Heart left ventricle (tissue), 16 donors: ENCODE measurements at regions of chr1 and their contacts with region 1.

Region 1: GRCh38 chr1:23344111-23344986 is at the start of gene HNRNPR:
- DNase-seq: peak; percentile 100
- ATAC-seq: peak; percentile 97 to 99 (median 99)
- H3K4me3 ChIP-seq: peak within 1 kb of the TSS; percentile 73 to 95 (median 89)
- H3K27ac ChIP-seq: peak within 1 kb of the TSS; percentile 84 to 99 (median 94)
- H3K4me1 ChIP-seq: peaks cover 0 to 49% (median 36%) of the 10 kb centered on the region in 12 donors
- H3K27me3 ChIP-seq: no peaks in the 10 kb centered on the region
- CTCF ChIP-seq: peak in 4 of 12 donors; percentile 18 to 39 (median 25)
- POLR2A ChIP-seq: peak in 1 of 2 donors; percentile 75
- total RNA-seq, gene HNRNPR: 38.0 to 83.5 (median 69.2) TPM

Region 2: GRCh38 chr1:23303524-23303923 is 40.8 kb before region 1 on chr1:
- intact Hi-C with region 1: no loop called
- DNase-seq: no peak
- ATAC-seq: no peak
- H3K4me3 ChIP-seq: no peak overlapping the region
- H3K27ac ChIP-seq: no peak overlapping the region
- H3K4me1 ChIP-seq: no peaks in the 10 kb centered on the region
- H3K27me3 ChIP-seq: no peaks in the 10 kb centered on the region
- CTCF ChIP-seq: no peak
- POLR2A ChIP-seq: no peak

Region 3: DNA sequence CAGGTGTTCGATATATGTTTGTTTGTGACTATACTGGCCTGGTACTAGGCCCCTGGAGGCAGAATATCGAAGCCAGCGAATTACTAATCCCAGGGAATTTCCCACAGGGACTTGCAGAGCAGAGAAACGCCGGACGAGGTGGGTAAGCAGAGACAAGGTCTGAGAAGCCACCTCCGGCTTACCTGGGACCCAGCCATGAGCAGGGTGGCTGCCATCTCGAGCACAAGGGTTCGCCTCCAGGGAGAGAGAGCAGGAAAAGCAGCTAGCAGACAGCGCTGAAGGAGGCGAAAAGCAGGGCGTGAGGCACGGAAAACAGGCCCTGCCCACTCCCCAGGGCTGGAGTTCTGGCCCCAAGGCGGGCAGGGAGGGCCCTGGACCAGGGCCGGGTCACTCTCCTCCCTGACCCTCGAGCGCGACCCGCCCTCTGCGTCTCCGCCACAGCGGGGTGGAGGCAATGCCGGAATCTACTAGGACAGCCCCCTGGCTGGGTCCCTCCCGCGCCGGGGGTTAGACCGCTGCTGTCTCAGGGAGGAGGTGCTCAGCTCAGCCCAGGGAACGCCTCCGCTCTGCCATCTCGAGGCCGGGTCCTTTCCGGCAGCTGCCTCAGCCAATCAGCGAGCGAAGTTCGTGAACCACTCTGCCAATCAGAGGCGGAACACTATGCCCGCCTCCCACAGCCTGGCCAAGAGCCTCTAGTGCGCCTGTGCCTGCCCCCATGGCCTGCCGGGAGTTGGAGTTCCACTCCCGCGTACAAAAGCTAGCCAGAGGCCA is 23.6 kb after region 1 on chr1:
- intact Hi-C with region 1: loop called in 7 of 10 experiments (anchors 1 to 2 kb)
- DNase-seq: peak; percentile 99
- ATAC-seq: peak; percentile 92 to 95 (median 94)
- H3K4me3 ChIP-seq: peak overlapping the region; percentile 66 to 100 (median 87)
- H3K27ac ChIP-seq: peak overlapping the region; percentile 94 to 100 (median 98)
- H3K4me1 ChIP-seq: peaks cover 17 to 50% (median 40%) of the 10 kb centered on the region in 12 donors
- H3K27me3 ChIP-seq: no peaks in the 10 kb centered on the region
- CTCF ChIP-seq: peak in 5 of 12 donors; percentile 13 to 44 (median 29)
- POLR2A ChIP-seq: peak in 1 of 2 donors; percentile 78

Region 4: GRCh38 chr1:23403735-23404486 is 59.6 kb after region 1 on chr1:
- intact Hi-C with region 1: loop called in 7 of 10 experiments (anchors 1 to 10 kb)
- DNase-seq: peak; percentile 86 to 90 (median 90)
- ATAC-seq: peak; percentile 85 to 94 (median 88)
- H3K4me3 ChIP-seq: peak overlapping the region in 7 of 12 donors; percentile 1 to 28 (median 8)
- H3K27ac ChIP-seq: peak overlapping the region in 11 of 12 donors; percentile 32 to 76 (median 56)
- H3K4me1 ChIP-seq: peaks cover 5 to 60% (median 34%) of the 10 kb centered on the region in 12 donors
- H3K27me3 ChIP-seq: no peaks in the 10 kb centered on the region
- CTCF ChIP-seq: peak; percentile 88 to 99 (median 95)
- POLR2A ChIP-seq: no peak

Region 5: GRCh38 chr1:23422241-23423030 is 78.1 kb after region 1 on chr1:
- intact Hi-C with region 1: loop called in 1 of 10 experiments (anchors 5 kb)
- DNase-seq: peak; percentile 74 to 84 (median 82)
- ATAC-seq: peak; percentile 53 to 70 (median 56)
- H3K4me3 ChIP-seq: peak overlapping the region in 8 of 12 donors; percentile 5 to 80 (median 22)
- H3K27ac ChIP-seq: peak overlapping the region in 11 of 12 donors; percentile 71 to 95 (median 85)
- H3K4me1 ChIP-seq: peaks cover 0 to 59% (median 36%) of the 10 kb centered on the region in 12 donors
- H3K27me3 ChIP-seq: peaks cover 0 to 16% (median 0%) of the 10 kb centered on the region in 9 donors
- CTCF ChIP-seq: no peak
- POLR2A ChIP-seq: no peak

Region 6: GRCh38 chr1:23484253-23485001 is 140.1 kb after region 1 on chr1:
- intact Hi-C with region 1: loop called in 3 of 10 experiments (anchors 2 to 10 kb)
- DNase-seq: peak; percentile 94 to 97 (median 96)
- ATAC-seq: peak; percentile 87 to 94 (median 92)
- H3K4me3 ChIP-seq: peak overlapping the region; percentile 81 to 100 (median 94)
- H3K27ac ChIP-seq: peak overlapping the region; percentile 71 to 98 (median 93)
- H3K4me1 ChIP-seq: peaks cover 0 to 45% (median 26%) of the 10 kb centered on the region in 12 donors
- H3K27me3 ChIP-seq: peaks cover 0 to 18% (median 0%) of the 10 kb centered on the region in 9 donors
- CTCF ChIP-seq: no peak
- POLR2A ChIP-seq: peak in 1 of 2 donors; percentile 36

Region 7: GRCh38 chr1:23522244-23522982 is 178.1 kb after region 1 on chr1:
- intact Hi-C with region 1: no loop called
- DNase-seq: no peak
- ATAC-seq: no peak
- H3K4me3 ChIP-seq: no peak overlapping the region
- H3K27ac ChIP-seq: peak overlapping the region in 1 of 12 donors; percentile 20
- H3K4me1 ChIP-seq: peaks cover 0 to 47% (median 0%) of the 10 kb centered on the region in 12 donors
- H3K27me3 ChIP-seq: no peaks in the 10 kb centered on the region
- CTCF ChIP-seq: no peak
- POLR2A ChIP-seq: no peak

Region 8: DNA sequence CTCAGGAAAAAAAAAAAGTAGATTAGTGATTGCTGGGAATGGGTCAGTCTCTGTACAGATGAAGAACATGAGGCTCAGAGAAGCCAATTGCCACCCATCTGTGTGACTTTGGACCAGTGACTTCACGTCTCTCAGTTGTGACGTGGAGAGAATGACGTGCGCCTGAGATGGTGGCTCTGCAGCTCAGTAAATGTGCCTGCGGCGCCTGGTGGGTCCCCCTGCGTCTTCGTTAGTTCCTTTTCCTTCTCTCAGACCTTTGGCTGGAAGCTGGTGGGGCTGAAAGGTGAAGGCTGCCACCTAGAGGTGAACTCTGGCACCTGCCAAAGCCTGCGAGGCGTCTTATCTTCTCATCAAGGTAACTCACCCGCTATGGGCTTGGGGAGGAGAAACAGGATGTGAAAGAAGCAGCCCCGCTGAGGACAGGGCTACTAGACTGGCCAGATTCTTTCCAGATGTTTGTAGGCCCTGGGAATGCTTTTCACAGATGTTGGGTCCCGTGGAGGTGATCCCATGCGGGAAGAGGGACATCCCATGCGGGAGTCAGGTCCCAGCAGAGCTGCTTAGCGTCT is 195.4 kb after region 1 on chr1:
- intact Hi-C with region 1: loop called in 1 of 10 experiments (anchors 10 kb)
- DNase-seq: peak; percentile 79 to 89 (median 82)
- ATAC-seq: peak; percentile 45 to 92 (median 90)
- H3K4me3 ChIP-seq: peak overlapping the region in 5 of 12 donors; percentile 2 to 29 (median 15)
- H3K27ac ChIP-seq: peak overlapping the region in 2 of 12 donors; percentile 3 to 21
- H3K4me1 ChIP-seq: peaks cover 0 to 13% (median 9%) of the 10 kb centered on the region in 12 donors
- H3K27me3 ChIP-seq: no peaks in the 10 kb centered on the region
- CTCF ChIP-seq: peak; percentile 89 to 96 (median 92)
- POLR2A ChIP-seq: no peak